ENCODE measurements at regions of chr7 and their contacts with region 1.

Region 1: GRCh38 chr7:70040970-70041766 is 442.9 kb downstream of the AUTS2 start:
- DNase-seq: no peak
- H3K4me3 ChIP-seq: no peak overlapping the region
- H3K27ac ChIP-seq: peak overlapping the region in 1 of 2 experiments; percentile 62; a peak in 1 of 4 replicates
- H3K4me1 ChIP-seq: peaks cover 28 to 55% of the 10 kb centered on the region in 2 experiments
- H3K27me3 ChIP-seq: no peaks in the 10 kb centered on the region
- CTCF ChIP-seq: peak; percentile 78
- EP300 ChIP-seq: no peak
- RAD21 ChIP-seq: peak; percentile 88

Region 2: GRCh38 chr7:69782917-69783684 is 258.1 kb before region 1 on chr7:
- CTCF ChIA-PET with region 1: no interaction called
- POLR2A ChIA-PET with region 1: no interaction called
- DNase-seq: no peak
- H3K4me3 ChIP-seq: no peak overlapping the region
- H3K27ac ChIP-seq: no peak overlapping the region
- H3K4me1 ChIP-seq: peaks cover 23 to 28% of the 10 kb centered on the region in 2 experiments; a peak in 3 of 4 replicates
- H3K27me3 ChIP-seq: no peaks in the 10 kb centered on the region
- CTCF ChIP-seq: no peak
- EP300 ChIP-seq: no peak
- RAD21 ChIP-seq: no peak

Region 3: GRCh38 chr7:69859342-69859741 is 181.8 kb before region 1 on chr7:
- CTCF ChIA-PET with region 1: no interaction called
- POLR2A ChIA-PET with region 1: no interaction called
- DNase-seq: no peak
- H3K4me3 ChIP-seq: no peak overlapping the region
- H3K27ac ChIP-seq: no peak overlapping the region
- H3K4me1 ChIP-seq: peaks cover 26 to 39% of the 10 kb centered on the region in 2 experiments; a peak in 3 of 4 replicates
- H3K27me3 ChIP-seq: no peaks in the 10 kb centered on the region
- CTCF ChIP-seq: no peak
- EP300 ChIP-seq: no peak
- RAD21 ChIP-seq: no peak

Region 4: DNA sequence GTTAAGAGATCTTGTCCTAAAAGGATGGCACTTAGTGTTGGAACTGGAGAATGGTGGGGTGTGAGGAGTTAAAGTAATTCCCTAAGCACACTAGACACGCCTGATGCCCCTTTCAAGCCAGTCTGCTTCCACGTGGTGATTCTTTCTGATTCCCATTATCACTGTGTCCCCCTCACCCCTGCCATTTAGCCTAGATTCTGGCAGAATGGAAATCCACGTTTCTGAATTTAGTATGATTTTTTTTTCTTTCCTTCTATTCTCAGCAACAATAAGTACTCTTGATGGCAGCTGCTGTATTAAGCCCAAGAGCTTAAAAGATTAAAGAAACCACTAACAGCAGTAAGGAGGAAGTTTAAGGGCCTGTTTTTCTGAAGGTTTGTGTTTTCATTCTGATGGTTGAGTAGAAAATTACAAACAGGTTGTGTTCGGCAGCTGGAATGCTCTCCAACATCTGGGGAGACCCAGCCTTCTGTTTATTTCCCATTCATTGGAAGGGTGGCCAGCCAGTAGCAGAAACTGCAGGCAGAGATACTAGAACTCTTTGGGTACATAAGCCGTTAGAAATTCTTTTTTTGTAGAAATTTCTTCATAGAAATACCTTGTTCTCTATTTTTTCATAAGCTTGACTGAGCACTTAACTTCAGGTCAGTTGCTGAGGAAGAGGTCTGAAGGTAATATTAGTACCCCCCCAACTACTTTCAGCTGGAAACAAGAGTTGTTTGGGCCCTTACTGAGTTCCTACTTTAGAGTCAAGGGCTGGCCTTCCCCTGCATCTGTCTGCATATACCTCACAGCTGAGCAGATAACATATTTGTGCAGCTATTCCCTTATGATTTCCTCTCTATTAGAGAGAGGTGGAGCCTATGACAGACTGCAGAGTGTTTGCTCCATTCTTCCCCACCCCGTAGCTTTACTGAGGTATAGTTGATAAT is 87.8 kb before region 1 on chr7:
- CTCF ChIA-PET with region 1: interaction called, 10 read pairs
- POLR2A ChIA-PET with region 1: no interaction called
- DNase-seq: no peak
- H3K4me3 ChIP-seq: no peak overlapping the region
- H3K27ac ChIP-seq: no peak overlapping the region
- H3K4me1 ChIP-seq: peaks cover 7 to 8% of the 10 kb centered on the region in 2 experiments; a peak in 1 of 4 replicates
- H3K27me3 ChIP-seq: no peaks in the 10 kb centered on the region
- CTCF ChIP-seq: no peak
- EP300 ChIP-seq: no peak
- RAD21 ChIP-seq: no peak

Region 5: GRCh38 chr7:70052691-70053090 is 11.5 kb after region 1 on chr7:
- CTCF ChIA-PET with region 1: interaction called, 27 read pairs
- POLR2A ChIA-PET with region 1: no interaction called
- DNase-seq: no peak
- H3K4me3 ChIP-seq: no peak overlapping the region
- H3K27ac ChIP-seq: peak overlapping the region in 1 of 2 experiments; percentile 58; a peak in 2 of 4 replicates
- H3K4me1 ChIP-seq: peaks cover 0 to 19% of the 10 kb centered on the region in 2 experiments; a peak in 1 of 4 replicates
- H3K27me3 ChIP-seq: no peaks in the 10 kb centered on the region
- CTCF ChIP-seq: no peak
- EP300 ChIP-seq: 0 out of 4 replicates have a peak, but pooled peaks of 1 of the 2 experiments have one; percentile 55
- RAD21 ChIP-seq: no peak

Region 6: GRCh38 chr7:70098133-70098561 is 57.0 kb after region 1 on chr7:
- CTCF ChIA-PET with region 1: no interaction called
- POLR2A ChIA-PET with region 1: no interaction called
- DNase-seq: no peak
- H3K4me3 ChIP-seq: no peak overlapping the region
- H3K27ac ChIP-seq: no peak overlapping the region
- H3K4me1 ChIP-seq: peaks cover 23 to 24% of the 10 kb centered on the region in 2 experiments
- H3K27me3 ChIP-seq: no peaks in the 10 kb centered on the region
- CTCF ChIP-seq: no peak
- EP300 ChIP-seq: no peak
- RAD21 ChIP-seq: no peak

Region 7: DNA sequence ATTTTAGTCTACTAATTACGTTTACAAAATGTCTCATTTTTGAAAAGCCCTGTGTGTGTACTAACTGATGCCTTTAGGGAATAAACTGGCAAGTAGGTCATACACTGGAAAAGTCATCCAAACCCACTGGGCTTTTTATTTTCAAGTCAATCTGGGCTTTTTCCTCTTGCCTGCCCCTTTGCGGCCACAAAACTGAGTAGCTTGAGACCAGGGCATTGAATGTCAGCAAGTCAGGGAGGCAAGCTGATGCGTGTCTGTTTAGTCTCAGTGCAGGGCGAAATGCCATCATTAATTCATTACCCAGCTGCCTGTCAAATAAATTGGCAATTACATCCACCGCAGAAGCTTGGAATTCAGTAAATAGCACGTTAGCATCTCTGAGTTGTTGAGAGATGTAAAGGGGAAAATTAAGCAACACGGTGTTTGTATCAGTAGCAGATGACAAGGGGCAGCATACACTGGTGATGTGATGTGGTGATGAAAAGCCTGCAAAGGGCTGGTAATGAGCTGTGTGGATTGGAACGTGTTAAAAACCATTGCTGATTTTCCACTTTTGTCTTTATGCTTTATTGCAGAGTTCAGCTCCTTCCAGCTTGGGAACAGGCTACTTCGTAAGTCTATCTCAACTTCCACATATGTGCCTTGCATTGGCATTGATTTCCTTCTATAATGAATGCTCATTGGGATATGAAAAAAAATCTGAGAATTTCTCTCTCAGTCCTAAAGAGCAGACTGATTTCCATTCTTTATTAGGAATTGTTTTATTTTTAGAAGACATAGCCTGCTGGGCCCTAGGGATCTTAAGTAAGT is 93.0 kb after region 1 on chr7:
- CTCF ChIA-PET with region 1: interaction called, 31 read pairs
- POLR2A ChIA-PET with region 1: no interaction called
- DNase-seq: peak; percentile 60
- H3K4me3 ChIP-seq: no peak overlapping the region
- H3K27ac ChIP-seq: peak overlapping the region in 1 of 2 experiments; percentile 80; a peak in 2 of 4 replicates
- H3K4me1 ChIP-seq: peaks cover 0 to 46% of the 10 kb centered on the region in 2 experiments; a peak in 2 of 4 replicates
- H3K27me3 ChIP-seq: no peaks in the 10 kb centered on the region
- CTCF ChIP-seq: no peak
- EP300 ChIP-seq: peak; percentile 24 to 97; a peak in 3 of 4 replicates
- RAD21 ChIP-seq: peak; percentile 49

Region 8: DNA sequence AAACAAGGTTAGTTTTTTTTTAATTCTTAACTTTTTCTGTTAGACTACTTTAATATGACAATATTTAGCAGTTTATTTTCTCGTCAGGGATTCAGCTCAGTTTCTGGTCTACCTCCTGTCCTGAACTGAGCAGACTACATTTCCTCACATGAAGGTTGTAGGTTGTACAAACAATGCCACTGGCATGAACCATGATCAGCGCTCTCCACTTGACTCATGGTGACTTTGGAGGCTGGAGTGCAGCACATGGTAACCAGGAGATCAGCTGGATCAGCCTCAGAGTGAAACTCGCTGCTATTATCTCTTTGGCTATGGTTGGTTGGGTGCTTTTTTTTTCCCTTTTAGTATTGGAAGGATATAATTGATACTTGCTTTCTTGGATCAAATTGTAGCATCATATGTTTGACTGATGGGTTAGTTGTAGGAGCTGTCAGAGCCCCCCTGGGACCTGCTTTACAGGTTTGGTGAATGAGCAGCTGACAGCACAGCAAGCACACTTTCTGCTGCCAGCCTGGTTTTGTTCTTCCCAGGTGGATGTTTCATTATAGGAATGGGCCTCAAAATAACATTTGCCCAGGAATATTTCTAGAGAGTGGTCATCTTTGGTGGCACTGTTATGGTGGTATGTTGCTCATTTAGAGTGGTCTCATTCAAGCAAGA is 113.5 kb after region 1 on chr7:
- CTCF ChIA-PET with region 1: interaction called, 225 read pairs
- POLR2A ChIA-PET with region 1: no interaction called
- DNase-seq: no peak
- H3K4me3 ChIP-seq: no peak overlapping the region
- H3K27ac ChIP-seq: no peak overlapping the region
- H3K4me1 ChIP-seq: no peaks in the 10 kb centered on the region; a peak in 1 of 4 replicates
- H3K27me3 ChIP-seq: no peaks in the 10 kb centered on the region
- CTCF ChIP-seq: no peak
- EP300 ChIP-seq: no peak
- RAD21 ChIP-seq: no peak

Region 9: DNA sequence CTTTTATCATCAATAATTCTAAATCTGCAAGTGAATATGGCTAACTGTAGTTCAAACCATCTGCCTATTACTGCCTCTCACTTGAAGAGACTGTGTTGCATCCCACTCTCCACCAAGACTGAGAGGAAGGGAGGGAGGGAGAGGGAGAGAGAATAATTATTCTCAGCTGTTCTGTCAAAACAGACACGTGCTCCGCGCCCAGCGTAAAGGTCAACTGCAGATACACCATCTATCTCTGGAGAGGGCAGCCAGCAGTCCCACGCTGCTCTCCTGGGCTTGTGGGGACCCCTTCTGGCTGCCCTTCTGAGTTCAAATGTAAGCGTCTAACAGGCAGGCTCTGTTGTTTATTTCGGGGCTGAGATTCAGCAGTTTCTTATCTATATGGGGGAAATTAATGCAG is 465.3 kb after region 1 on chr7:
- CTCF ChIA-PET with region 1: interaction called, 74 read pairs
- POLR2A ChIA-PET with region 1: interaction called, 3 read pairs
- DNase-seq: peak; percentile 82
- H3K4me3 ChIP-seq: no peak overlapping the region
- H3K27ac ChIP-seq: peak overlapping the region in 1 of 2 experiments; percentile 77; a peak in 2 of 4 replicates
- H3K4me1 ChIP-seq: peaks cover 0 to 23% of the 10 kb centered on the region in 2 experiments; a peak in 1 of 4 replicates
- H3K27me3 ChIP-seq: no peaks in the 10 kb centered on the region
- CTCF ChIP-seq: peak; percentile 40
- EP300 ChIP-seq: peak in 1 of 2 experiments; percentile 90; a peak in 2 of 4 replicates
- RAD21 ChIP-seq: peak; percentile 98

Measured in SK-N-SH (cell line).